ENCODE measurements at regions of chr16 and their contacts with region 1.

Region 1: GRCh38 chr16:12584488-12585223 is 219.0 kb downstream of the CPPED1 start:
- DNase-seq: no peak
- ATAC-seq: no peak
- H3K4me3 ChIP-seq: no peak overlapping the region
- H3K27ac ChIP-seq: no peak overlapping the region
- H3K4me1 ChIP-seq: no peaks in the 10 kb centered on the region
- H3K27me3 ChIP-seq: peaks cover 0 to 9% (median 0%) of the 10 kb centered on the region in 9 donors
- CTCF ChIP-seq: no peak
- POLR2A ChIP-seq: no peak

Region 2: GRCh38 chr16:12420653-12421209 is 163.9 kb before region 1 on chr16:
- intact Hi-C with region 1: no loop called
- DNase-seq: no peak
- ATAC-seq: no peak
- H3K4me3 ChIP-seq: no peak overlapping the region
- H3K27ac ChIP-seq: no peak overlapping the region
- H3K4me1 ChIP-seq: no peaks in the 10 kb centered on the region
- H3K27me3 ChIP-seq: no peaks in the 10 kb centered on the region
- CTCF ChIP-seq: no peak
- POLR2A ChIP-seq: no peak

Region 3: GRCh38 chr16:12646490-12647274 is 62.0 kb after region 1 on chr16:
- intact Hi-C with region 1: loop called in 1 of 10 experiments (anchors 10 kb)
- DNase-seq: peak in 1 of 5 donors; percentile 27
- ATAC-seq: peak in 1 of 4 donors; percentile 54
- H3K4me3 ChIP-seq: no peak overlapping the region
- H3K27ac ChIP-seq: no peak overlapping the region
- H3K4me1 ChIP-seq: peaks cover 0 to 8% (median 0%) of the 10 kb centered on the region in 12 donors
- H3K27me3 ChIP-seq: peaks cover 0 to 8% (median 0%) of the 10 kb centered on the region in 9 donors
- CTCF ChIP-seq: no peak
- POLR2A ChIP-seq: no peak